ENCODE measurements at regions of chr2 and their contacts with region 1.

Region 1: DNA sequence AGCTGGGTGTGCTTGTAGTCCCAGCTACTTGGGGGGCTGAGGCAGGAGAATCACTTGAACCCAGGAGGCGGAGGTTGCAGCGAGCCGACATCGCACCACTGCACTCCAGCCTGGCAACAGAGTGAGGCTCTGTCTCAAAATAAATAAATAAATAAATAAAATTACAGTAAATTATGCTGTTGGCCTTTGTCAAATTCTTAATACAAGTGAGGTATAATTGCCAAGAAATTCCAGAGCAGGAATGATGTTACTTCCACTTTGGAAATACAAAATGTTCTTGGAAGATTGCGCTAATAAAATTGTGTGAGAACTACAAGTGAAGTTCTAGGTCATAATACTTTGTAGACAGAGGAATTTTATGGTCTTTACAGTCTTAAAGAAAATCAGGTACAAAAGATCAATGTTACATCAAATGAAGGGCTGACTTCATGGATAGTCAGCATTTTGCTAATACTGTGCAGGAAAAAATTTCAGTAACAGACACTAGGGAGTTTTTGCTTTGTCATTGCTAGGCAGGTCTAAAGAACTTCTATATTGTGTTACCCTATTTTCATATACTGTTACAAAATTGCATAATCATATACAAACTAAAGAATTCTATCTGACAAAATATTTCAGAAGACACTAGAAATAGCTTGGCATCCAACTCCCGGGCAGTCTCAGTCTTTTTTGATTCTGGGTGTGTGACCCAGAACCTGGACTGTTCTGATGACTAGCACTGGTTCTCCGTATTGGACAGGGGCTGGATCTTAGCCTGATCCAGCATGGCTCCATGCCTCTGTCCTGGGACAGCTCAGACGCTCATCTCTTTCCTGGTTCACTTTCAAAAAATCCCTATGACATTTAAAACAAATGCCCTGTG is 76.0 kb upstream of the STK17B start:
- DNase-seq: no peak
- H3K4me3 ChIP-seq: no peak overlapping the region
- H3K27ac ChIP-seq: peak overlapping the region; percentile 56
- H3K4me1 ChIP-seq: peaks cover 14% of the 10 kb centered on the region
- H3K27me3 ChIP-seq: no peaks in the 10 kb centered on the region
- CTCF ChIP-seq: no peak

Region 2: GRCh38 chr2:196200557-196200956 is 46.8 kb before region 1 on chr2:
- intact Hi-C with region 1: no loop called
- DNase-seq: no peak
- H3K4me3 ChIP-seq: no peak overlapping the region
- H3K27ac ChIP-seq: peak overlapping the region; percentile 67
- H3K4me1 ChIP-seq: peaks cover 22% of the 10 kb centered on the region
- H3K27me3 ChIP-seq: no peaks in the 10 kb centered on the region
- CTCF ChIP-seq: no peak

Region 3: GRCh38 chr2:196220671-196221070 is 26.7 kb before region 1 on chr2:
- intact Hi-C with region 1: no loop called
- DNase-seq: no peak
- H3K4me3 ChIP-seq: no peak overlapping the region
- H3K27ac ChIP-seq: no peak overlapping the region
- H3K4me1 ChIP-seq: no peaks in the 10 kb centered on the region
- H3K27me3 ChIP-seq: no peaks in the 10 kb centered on the region
- CTCF ChIP-seq: no peak

Region 4: GRCh38 chr2:196271795-196272194 is 24.4 kb after region 1 on chr2:
- intact Hi-C with region 1: loop called (anchors 2 kb)
- DNase-seq: no peak
- H3K4me3 ChIP-seq: no peak overlapping the region
- H3K27ac ChIP-seq: no peak overlapping the region
- H3K4me1 ChIP-seq: peaks cover 69% of the 10 kb centered on the region
- H3K27me3 ChIP-seq: no peaks in the 10 kb centered on the region
- CTCF ChIP-seq: no peak